GM13977 (cell line): ENCODE measurements at regions of chr1 and their contacts with region 1.

Region 1: DNA sequence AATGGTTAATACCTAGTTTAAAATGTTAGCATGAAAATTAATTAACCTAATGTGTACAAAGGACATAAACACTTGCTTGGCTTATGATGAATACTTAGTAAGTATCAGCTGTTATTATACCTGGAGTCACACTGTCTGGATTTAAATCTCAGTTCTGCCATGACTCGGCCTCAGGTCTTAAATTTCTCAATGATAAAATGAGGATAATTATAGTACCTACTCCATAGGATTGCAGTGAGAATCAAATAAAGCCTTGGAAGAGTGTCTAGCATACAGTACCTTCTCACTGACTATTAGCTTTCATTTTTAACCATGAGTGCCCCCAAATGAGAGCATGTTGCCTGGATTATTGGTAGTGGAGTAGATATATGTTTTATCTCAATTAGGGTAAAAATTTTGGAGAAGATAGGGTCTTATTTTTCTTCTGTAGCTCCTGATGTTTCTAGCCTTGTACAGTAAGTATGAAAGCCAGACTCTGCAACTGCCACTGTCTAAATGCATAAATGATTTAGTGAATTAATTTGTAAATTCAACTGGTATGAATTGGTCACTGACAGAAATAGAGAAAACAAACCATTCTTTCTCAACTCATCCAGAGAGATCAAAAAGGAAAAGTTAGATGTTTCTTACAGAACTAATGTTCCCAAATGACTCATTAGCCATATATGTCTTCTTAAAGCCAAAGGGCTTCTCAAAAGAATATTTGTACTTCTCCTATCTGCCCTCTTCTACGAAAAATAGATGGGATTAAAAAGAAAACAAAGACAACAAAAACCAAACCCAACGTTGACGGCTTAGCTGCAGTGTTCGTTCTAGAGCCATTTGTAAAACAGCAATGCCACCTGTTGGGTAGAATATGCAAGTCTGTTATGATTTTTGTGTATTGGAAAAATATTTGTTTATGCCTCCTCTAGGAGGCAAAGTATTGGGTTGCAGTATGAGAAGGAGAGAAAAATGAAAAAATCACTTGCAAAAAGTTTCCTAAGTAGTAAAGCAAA is 53.8 kb upstream of the MROH9 start:
- DNase-seq: peak; percentile 21
- CTCF ChIP-seq: peak; percentile 73

Region 2: DNA sequence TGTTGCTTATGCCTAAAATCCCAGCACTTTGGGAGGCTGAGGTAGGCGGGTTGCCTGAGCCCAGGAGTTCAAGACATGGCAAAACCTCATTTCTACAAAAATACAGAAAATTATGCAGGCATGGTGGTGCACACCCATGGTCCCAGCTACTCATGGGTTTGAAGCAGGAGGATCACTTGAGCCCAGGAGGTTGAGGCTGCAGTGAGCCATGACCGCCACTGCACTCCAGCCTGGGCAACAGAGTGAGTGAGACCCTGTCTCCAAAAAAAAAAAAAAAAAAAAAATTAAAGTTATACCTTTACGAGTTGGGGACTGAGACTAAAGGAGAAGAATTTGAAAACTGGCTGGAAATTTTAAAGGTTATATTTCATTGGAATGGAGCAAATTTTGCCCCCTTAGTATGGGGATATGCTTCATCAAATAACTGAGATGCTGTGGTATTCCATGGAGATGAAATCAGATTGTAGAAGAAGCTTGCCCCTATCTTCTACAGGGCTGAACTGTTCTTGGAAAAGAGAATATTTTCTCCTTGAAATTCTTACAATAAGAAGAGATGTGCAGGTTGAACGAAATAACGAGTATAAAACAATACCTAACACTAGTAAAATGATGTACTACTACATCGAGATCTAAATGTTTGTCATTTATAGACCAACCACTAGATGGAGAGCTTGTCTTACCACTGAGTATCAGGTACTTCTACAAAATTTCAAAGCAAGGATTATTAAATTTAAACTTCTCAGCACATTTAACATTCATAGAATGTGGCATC is 952.9 kb before region 1 on chr1:
- in situ Hi-C with region 1: loop called (anchors 25 kb)
- DNase-seq: no peak
- CTCF ChIP-seq: peak; percentile 61

Region 3: GRCh38 chr1:170252851-170253579 is 628.6 kb before region 1 on chr1:
- in situ Hi-C with region 1: no loop called
- DNase-seq: no peak
- CTCF ChIP-seq: no peak

Region 4: DNA sequence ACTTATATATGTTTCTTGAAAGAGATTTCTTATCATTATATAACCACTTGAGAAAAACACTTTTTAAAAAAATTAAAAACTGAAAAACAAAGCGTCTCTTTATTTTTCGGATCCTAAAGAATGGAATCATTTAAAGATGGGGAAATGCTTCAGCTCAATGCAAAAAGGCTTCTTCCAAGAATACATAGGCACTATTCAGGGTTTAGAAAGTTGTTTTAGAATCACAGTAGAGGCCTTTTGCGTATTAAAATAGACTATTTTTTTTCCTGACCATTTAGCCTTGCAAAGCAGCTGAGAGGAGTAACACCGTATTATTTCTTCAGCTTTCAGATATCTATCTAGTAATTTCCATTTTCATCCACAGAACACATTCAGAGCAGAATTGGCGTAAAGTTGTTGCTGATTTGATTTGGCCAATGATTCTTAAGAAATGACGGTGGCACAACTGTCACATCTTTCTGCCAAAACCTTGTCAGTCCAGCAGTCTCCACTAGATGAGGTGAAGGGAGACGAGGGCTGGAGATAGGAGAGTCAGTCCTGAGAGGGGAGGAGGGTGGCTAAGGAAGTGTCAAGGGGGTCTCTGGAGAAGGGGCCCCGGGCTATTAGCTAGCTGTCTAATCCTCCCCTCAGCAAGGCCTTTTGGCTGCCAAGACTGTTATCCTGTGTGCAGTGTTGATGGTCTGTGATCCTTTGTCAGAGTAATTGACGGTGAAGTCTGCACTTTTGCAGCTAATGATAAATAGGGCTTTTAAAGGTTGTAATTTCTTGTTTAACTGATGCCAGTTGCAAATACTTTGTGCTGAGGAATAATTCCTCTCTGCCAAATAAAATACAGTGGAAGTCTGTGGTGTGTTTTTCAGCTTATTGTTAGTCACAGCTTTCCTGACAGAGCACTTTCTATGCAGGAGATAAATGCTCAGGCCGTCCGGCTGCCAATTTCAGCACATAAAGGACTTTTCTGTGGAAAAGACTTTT is 183.0 kb before region 1 on chr1:
- in situ Hi-C with region 1: loop called (anchors 25 kb)
- DNase-seq: no peak
- CTCF ChIP-seq: no peak